ENCODE measurements at regions of chr18 and their contacts with region 1.

Region 1: DNA sequence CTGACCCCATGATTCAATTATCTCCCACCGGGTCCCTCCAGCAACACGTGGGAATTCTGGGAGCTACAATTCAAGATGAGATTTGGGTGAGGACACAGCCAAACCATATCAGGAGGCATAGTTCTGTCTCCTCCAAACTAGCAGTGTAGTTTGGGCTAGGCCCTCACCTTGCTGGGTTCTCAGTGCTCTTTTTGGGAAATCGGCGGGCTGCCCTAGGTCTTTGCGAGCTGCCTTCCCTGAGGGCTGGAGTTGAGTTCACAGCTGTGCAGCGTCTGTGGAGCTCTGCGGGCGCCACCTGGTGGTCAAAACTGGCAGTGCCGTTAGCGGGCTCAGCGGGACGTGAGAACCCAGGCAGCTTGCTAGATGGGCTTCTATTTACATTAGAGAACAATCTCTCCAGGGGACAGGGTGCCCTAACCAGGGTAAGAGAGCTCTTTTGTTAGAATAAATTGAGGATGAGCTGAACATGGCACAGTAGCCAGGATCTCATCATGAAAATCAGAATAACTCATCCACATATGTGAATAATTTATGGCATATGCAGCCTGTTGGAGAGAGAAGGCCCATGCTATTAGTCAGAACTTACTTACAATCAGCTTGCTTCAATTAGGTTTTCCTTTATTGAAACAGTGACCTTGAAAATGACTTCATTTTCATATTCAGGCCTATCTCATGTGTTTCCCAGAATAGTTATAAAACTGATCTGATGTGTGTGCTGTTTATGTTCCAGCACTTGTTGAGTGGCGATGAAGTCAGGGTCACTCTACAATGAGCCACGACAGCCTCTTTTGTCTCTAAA is 27.4 kb upstream of the YES1 start:
- DNase-seq: peak; percentile 84
- CTCF ChIP-seq: peak; percentile 97

Region 2: GRCh38 chr18:623761-624620 is 215.4 kb before region 1 on chr18:
- in situ Hi-C with region 1: loop called (anchors 10 kb)
- DNase-seq: peak; percentile 46
- CTCF ChIP-seq: peak; percentile 80

Region 3: DNA sequence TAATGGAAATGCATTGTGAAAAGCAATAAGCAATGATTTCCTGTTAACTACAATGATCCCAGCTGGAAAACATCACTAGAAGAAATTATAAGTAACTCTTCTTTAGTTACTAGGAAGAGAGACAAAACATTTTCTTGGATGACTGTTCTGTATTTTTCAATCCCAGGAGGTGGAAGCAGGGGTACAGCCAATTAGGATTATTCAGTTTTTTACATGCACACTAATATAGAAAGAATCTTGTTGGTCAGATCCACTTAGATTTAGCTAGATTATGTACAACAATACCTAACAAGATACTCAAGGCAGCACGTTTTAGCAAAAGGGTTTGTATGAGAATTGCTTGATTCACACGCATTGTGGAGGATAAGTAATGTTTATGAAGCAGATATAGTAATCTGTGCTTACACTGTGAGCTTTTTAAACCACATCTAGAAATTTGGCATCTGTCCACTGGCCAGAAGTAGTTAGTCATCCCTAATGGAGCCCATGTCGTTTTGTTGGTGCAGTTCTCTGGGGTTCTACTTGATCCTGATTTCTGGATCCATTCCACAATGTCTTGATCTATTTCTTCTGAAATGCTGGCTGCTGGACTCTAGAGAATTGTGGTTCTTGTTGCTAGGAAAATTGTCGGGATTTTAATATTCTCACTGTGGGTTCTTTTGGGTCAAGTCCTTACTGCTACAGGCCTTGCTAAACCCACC is 264.9 kb after region 1 on chr18:
- in situ Hi-C with region 1: no loop called
- DNase-seq: no peak
- CTCF ChIP-seq: no peak

Measured in GM13977 (cell line).